Head of caudate nucleus (tissue), 42 donors: ENCODE measurements at regions of chr2 and their contacts with region 1.

Region 1: DNA sequence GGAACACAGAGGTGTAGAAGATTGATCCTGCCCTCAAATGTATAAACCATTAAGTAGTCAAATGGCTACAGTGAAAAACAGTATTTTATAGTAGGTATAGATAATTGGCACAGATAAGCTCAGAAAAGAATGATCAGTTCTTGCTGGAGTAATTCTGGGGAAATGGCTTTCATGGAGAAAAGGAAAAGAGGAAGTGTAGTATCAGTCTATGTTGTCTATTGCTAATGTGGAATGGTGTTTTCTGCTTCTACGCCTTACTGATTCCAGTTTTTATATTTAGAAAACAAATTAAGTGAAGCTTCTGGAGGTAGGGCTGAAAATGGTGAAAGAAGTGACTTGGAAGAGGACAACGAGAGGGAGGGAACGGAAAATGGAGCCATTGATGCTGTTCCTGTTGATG is 22.2 kb downstream of the ZC3H15 start:
- DNase-seq: no peak

Region 2: DNA sequence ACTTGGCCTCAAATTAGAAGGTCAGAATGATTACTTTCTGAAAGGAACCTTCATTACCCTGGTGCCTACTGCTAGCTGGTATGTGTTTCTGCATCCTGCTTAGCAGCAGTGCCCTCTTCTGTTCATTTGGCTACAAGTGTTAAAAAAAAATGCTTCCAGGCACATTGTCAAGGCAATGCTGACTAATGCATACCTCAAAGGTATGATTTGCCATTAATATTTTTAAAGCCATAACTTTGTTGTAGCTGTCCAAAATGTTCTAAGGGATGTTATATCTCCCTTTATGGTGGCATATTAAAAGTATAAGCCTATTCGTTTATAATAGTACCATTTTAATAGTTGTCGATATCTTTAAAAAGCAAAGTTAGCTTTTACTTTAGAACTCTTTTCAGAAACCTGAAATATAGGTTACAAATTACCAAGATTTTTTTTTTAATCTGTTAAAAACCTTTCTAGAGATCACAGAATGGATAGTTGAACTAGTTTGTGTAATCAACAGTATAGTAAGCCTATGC is 133.6 kb after region 1 on chr2:
- intact Hi-C with region 1: loop called (anchors 5 kb)
- DNase-seq: peak in 30 of 42 donors; percentile 15 to 72 (median 51)